ENCODE measurements at regions of chr3 and their contacts with region 1.

Region 1: GRCh38 chr3:123328851-123329635 is 119.8 kb downstream of the ADCY5 start:
- ATAC-seq: peak; percentile 92 to 99 (median 94)
- H3K4me3 ChIP-seq: no peak overlapping the region
- H3K27ac ChIP-seq: no peak overlapping the region
- H3K4me1 ChIP-seq: peaks cover 0 to 2% of the 10 kb centered on the region in 2 donors

Region 2: DNA sequence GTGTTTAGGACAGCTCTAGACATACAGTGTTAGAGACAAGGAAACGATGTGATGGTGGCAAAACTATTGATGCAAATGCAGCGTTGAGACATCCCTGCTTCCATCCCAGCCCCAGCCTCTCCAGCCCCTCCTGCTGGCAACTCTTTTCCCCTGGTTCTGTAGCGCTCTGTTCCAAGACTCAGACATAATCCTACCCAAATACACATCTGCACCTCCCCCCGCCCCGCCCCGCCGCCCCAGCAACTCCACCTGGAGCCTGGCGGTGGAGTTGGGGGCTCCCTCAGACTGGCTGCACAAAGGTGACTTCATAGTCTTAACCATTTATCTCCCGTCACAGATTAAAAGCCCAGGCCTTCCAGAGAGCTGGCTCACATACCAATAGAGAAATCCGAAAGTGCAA is 134.5 kb before region 1 on chr3:
- in situ Hi-C with region 1: no loop called
- ATAC-seq: peak in 6 of 8 experiments; percentile 30 to 75 (median 58)
- H3K4me3 ChIP-seq: no peak overlapping the region
- H3K27ac ChIP-seq: no peak overlapping the region
- H3K4me1 ChIP-seq: no peaks in the 10 kb centered on the region

Region 3: GRCh38 chr3:123449997-123450604 is 121.1 kb after region 1 on chr3:
- in situ Hi-C with region 1: loop called in 1 of 9 experiments (anchors 25 kb)
- ATAC-seq: peak; percentile 31 to 77 (median 65)
- H3K4me3 ChIP-seq: peak overlapping the region; percentile 58 to 82 (median 66)
- H3K27ac ChIP-seq: peak overlapping the region; percentile 10 to 18
- H3K4me1 ChIP-seq: peaks cover 16 to 17% of the 10 kb centered on the region in 2 donors

Region 4: GRCh38 chr3:123489400-123490004 is 160.5 kb after region 1 on chr3:
- in situ Hi-C with region 1: loop called in 6 of 9 experiments (anchors 10 to 25 kb)
- ATAC-seq: peak; percentile 75 to 90 (median 86)
- H3K4me3 ChIP-seq: no peak overlapping the region
- H3K27ac ChIP-seq: no peak overlapping the region
- H3K4me1 ChIP-seq: peaks cover 0 to 5% of the 10 kb centered on the region in 2 donors

Region 5: GRCh38 chr3:123559040-123559861 is 230.2 kb after region 1 on chr3:
- in situ Hi-C with region 1: loop called in 1 of 9 experiments (anchors 25 kb)
- ATAC-seq: peak in 2 of 8 experiments; percentile 28 to 45
- H3K4me3 ChIP-seq: no peak overlapping the region
- H3K27ac ChIP-seq: no peak overlapping the region
- H3K4me1 ChIP-seq: no peaks in the 10 kb centered on the region

Measured in motor neuron (in vitro differentiated cells).